ENCODE measurements at regions of chr14 and their contacts with region 1.

Region 1: DNA sequence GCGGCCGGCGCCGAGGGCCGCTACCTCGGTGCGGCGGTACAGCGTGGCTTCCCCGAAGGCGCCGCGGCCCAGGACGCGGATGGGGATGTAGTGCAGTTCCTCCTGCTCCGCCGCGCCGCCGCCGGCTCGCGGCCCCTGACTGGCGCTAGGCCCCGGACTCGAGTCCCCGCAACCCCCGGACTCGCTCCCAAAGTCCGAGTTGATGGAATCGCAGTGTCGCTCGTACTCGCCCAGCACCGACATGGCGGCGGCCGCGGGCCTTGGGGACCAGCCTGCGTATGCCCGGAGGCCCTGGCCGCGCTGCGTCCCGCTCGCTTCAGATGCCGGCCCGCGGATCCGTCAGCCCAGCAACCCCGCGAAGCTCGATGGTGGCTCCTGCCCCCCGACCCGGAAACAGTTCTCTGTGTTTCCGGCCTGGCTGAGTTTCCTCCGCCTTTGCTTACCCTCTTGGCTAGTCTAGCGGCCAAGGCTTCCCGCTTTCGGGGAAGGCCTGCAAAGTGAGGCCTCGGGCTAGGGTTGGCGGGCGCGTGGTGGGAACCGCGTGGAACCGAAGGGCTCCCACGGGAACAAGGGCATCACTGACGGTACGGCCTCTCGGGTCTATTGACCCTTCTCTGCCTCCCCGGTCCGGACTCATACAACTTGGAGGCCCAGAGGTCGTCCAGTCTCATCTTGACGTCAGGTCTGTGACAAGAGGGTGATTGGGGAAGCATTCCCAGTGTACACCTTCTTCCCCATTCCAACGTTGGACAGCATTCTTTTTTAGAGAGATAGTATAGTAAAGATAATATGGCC is at the start of gene NEK9:
- DNase-seq: peak; percentile 56 to 88
- H3K4me3 ChIP-seq: peak within 1 kb of the TSS; percentile 75 to 89 (median 86)
- H3K27ac ChIP-seq: peak within 1 kb of the TSS; percentile 86
- H3K4me1 ChIP-seq: peaks cover 0 to 4% (median 1%) of the 10 kb centered on the region in 4 experiments; a peak in 5 of 7 replicates
- H3K27me3 ChIP-seq: no peaks in the 10 kb centered on the region
- CTCF ChIP-seq: 0 out of 4 replicates have a peak, but pooled peaks of 1 of the 3 experiments have one; percentile 3
- EP300 ChIP-seq: peak in 1 of 2 experiments; percentile 0; a peak in 1 of 3 replicates
- POLR2A ChIP-seq: peak; percentile 44 to 96
- RAD21 ChIP-seq: no peak
- total RNA-seq, gene NEK9: 39.5 and 43.6 TPM in 2 replicates

Region 2: DNA sequence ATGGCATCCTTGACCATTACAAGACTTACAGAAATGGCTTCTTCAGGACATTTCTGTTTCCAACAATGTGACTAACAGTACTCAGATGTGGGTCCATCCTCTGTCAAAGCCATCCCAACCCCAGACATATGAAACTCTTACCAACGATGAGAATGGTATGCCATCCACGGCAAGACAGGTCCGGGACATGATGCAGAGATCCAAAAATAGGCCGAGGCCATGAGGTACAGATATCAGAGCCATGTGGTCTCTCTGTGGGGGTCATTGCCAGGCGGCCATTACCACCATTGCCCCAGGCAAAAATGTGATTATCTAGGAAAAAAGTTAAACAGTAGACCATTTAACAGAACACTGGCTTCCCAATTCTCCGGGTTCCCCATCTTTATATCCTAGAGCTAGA is 29.9 kb before region 1 on chr14:
- CTCF ChIA-PET with region 1: no interaction called
- POLR2A ChIA-PET with region 1: no interaction called
- DNase-seq: no peak
- H3K4me3 ChIP-seq: no peak overlapping the region
- H3K27ac ChIP-seq: no peak overlapping the region
- H3K4me1 ChIP-seq: no peaks in the 10 kb centered on the region; a peak in 2 of 7 replicates
- H3K27me3 ChIP-seq: no peaks in the 10 kb centered on the region
- CTCF ChIP-seq: no peak
- EP300 ChIP-seq: no peak
- POLR2A ChIP-seq: no peak
- RAD21 ChIP-seq: no peak

Region 3: DNA sequence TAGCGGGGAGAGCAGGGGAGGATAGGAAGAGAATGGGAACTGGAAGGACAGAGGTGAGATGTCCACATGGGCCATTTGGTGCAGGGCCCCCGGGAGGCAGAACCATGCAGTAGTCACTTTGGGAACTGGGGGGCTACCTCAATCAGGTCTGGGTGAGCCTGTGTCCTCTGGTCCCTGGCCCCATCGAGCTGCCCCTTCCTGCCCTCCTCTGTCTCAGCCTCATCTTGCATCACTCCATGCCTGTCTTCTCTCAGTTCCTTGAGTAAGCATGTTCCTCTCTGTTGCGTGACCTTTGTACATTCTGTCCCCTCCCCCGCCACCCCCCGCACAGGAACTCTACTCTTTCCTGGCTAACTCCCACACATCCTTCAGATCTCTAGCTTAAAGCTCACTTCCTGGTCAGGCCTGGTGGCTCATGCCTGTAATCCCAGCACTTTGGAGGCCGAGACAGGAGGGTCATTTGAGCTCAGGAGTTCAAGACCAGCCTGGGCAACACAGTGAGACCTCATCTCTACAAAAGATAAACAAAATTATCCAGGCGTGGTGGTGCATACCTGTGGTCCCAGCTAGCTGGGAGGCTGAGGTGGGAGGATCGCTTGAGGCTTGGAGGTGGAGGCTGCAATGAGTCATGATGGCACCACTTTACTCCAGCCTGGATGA is 174.9 kb after region 1 on chr14:
- CTCF ChIA-PET with region 1: interaction called, 67 read pairs
- POLR2A ChIA-PET with region 1: interaction called, 14 read pairs
- DNase-seq: no peak
- H3K4me3 ChIP-seq: no peak overlapping the region
- H3K27ac ChIP-seq: no peak overlapping the region
- H3K4me1 ChIP-seq: no peaks in the 10 kb centered on the region
- H3K27me3 ChIP-seq: no peaks in the 10 kb centered on the region
- CTCF ChIP-seq: no peak
- EP300 ChIP-seq: no peak
- POLR2A ChIP-seq: no peak
- RAD21 ChIP-seq: no peak

Measured in H1 (cell line).